ENCODE measurements at regions of chr15 and their contacts with region 1.

Region 1: GRCh38 chr15:75801859-75802593 is 41.2 kb upstream of the UBE2Q2 start:
- DNase-seq: peak; percentile 91
- ATAC-seq: peak; percentile 100
- H3K4me3 Mint-ChIP-seq: peak overlapping the region; percentile 56
- H3K27ac Mint-ChIP-seq: no peak overlapping the region
- H3K4me1 Mint-ChIP-seq: peaks cover 13% of the 10 kb centered on the region
- H3K27me3 Mint-ChIP-seq: peaks cover 59% of the 10 kb centered on the region
- CTCF ChIP-seq: peak; percentile 89

Region 2: GRCh38 chr15:75523011-75523410 is 279.0 kb before region 1 on chr15:
- CTCF ChIA-PET with region 1: no interaction called
- POLR2A ChIA-PET with region 1: no interaction called
- DNase-seq: no peak
- ATAC-seq: no peak
- H3K4me3 Mint-ChIP-seq: no peak overlapping the region
- H3K27ac Mint-ChIP-seq: no peak overlapping the region
- H3K4me1 Mint-ChIP-seq: no peaks in the 10 kb centered on the region
- H3K27me3 Mint-ChIP-seq: no peaks in the 10 kb centered on the region
- CTCF ChIP-seq: no peak

Region 3: GRCh38 chr15:75684642-75685041 is 117.4 kb before region 1 on chr15:
- CTCF ChIA-PET with region 1: interaction called, 24 read pairs
- POLR2A ChIA-PET with region 1: no interaction called
- DNase-seq: no peak
- ATAC-seq: no peak
- H3K4me3 Mint-ChIP-seq: no peak overlapping the region
- H3K27ac Mint-ChIP-seq: no peak overlapping the region
- H3K4me1 Mint-ChIP-seq: peaks cover 22% of the 10 kb centered on the region
- H3K27me3 Mint-ChIP-seq: 0 out of 2 replicates have a peak, but pooled peaks cover 2% of the 10 kb centered on the region
- CTCF ChIP-seq: no peak

Region 4: GRCh38 chr15:75723847-75724660 is 78.0 kb before region 1 on chr15:
- CTCF ChIA-PET with region 1: interaction called, 40 read pairs
- POLR2A ChIA-PET with region 1: no interaction called
- DNase-seq: peak; percentile 35
- ATAC-seq: peak; percentile 9; the same call in 1 of the 2 replicates
- H3K4me3 Mint-ChIP-seq: no peak overlapping the region
- H3K27ac Mint-ChIP-seq: no peak overlapping the region
- H3K4me1 Mint-ChIP-seq: no peaks in the 10 kb centered on the region; the same call in 1 of the 2 replicates
- H3K27me3 Mint-ChIP-seq: peaks cover 50% of the 10 kb centered on the region
- CTCF ChIP-seq: no peak

Region 5: DNA sequence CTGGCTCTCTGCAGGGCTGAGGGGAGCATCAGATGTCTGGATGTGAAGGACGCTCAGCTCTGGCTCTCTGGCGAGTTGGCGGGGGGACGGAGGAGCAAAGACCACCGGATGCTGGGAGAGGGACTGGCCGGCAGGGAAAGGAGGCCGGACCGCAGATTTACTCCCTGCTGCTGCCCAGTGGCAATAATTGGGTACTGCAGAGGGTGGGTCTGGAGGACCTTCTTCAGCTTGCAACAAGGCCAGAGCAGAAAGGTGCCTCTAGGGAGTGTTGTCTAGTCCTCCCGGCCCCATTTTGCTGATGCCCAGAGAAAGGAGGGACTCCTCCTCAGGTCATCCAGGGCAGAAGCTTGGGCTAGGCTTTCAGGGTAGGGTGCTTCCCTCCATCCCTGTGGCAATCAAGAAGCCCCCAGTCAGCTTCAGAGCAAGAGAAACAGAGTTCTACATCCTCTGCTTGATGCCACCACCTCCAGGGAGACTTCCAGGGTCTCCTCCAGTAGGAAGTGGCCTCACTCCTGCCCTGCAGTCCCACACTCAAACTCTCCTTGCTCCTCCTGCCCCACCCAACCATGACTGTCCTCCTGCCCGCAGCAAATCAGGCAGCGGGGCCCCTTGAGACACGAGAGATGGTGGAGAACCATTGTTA is 69.1 kb before region 1 on chr15:
- CTCF ChIA-PET with region 1: interaction called, 40 read pairs
- POLR2A ChIA-PET with region 1: no interaction called
- DNase-seq: peak; percentile 92
- ATAC-seq: peak; percentile 82
- H3K4me3 Mint-ChIP-seq: peak overlapping the region; percentile 20; the same call in 1 of the 2 replicates
- H3K27ac Mint-ChIP-seq: no peak overlapping the region
- H3K4me1 Mint-ChIP-seq: peaks cover 44% of the 10 kb centered on the region
- H3K27me3 Mint-ChIP-seq: peaks cover 2% of the 10 kb centered on the region; the same call in 1 of the 2 replicates
- CTCF ChIP-seq: peak; percentile 75

Region 6: GRCh38 chr15:75738647-75739331 is 63.2 kb before region 1 on chr15:
- CTCF ChIA-PET with region 1: interaction called, 14 read pairs
- POLR2A ChIA-PET with region 1: no interaction called
- DNase-seq: peak; percentile 98
- ATAC-seq: peak; percentile 98
- H3K4me3 Mint-ChIP-seq: peak overlapping the region; percentile 93
- H3K27ac Mint-ChIP-seq: no peak overlapping the region
- H3K4me1 Mint-ChIP-seq: peaks cover 28% of the 10 kb centered on the region
- H3K27me3 Mint-ChIP-seq: peaks cover 40% of the 10 kb centered on the region
- CTCF ChIP-seq: no peak

Region 7: DNA sequence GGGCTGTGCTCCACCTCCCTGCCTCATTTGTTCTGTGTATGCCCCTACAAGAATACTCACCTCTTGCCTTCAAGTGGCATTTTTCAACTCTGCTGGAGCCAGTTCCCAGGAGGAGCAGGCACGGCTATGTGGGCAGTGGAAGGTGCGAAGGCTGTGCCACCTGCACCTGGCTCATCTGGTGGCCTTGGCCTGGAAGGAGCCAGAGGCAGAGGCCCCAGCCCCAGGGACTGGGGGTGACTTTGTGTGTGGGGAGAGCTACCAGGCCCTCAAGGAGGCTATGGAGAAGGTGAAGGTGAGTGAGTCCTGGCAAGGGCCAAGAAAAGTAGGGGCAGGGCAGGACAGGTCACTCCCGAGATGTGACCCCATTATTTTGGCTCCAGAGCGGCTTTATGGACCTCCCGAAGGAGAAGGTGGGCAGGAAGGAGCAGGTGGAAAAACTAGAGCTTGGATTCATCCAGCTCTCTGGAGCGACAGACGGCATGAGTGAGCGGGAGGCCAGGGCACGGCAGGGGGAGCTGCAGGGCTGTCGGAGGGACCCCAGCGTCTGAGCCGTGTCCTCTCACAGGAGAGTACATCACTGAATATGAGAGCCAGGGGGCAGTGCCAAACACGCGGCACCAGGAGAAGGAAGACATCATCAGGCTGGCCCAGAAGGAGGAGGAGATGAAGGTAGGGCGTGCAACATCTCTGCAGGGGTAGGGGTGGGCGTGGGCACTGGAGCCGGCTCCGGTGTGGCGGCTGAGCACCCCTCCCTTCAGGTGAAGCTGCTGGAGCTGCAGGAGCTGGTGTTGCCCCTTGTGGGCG is 16.1 kb before region 1 on chr15:
- CTCF ChIA-PET with region 1: interaction called, 42 read pairs
- POLR2A ChIA-PET with region 1: no interaction called
- DNase-seq: peak; percentile 74
- ATAC-seq: peak; percentile 66
- H3K4me3 Mint-ChIP-seq: peak overlapping the region; percentile 64
- H3K27ac Mint-ChIP-seq: no peak overlapping the region
- H3K4me1 Mint-ChIP-seq: peaks cover 7% of the 10 kb centered on the region
- H3K27me3 Mint-ChIP-seq: peaks cover 34% of the 10 kb centered on the region
- CTCF ChIP-seq: no peak

Region 8: GRCh38 chr15:75928680-75929608 is 126.9 kb after region 1 on chr15:
- CTCF ChIA-PET with region 1: interaction called, 12 read pairs
- POLR2A ChIA-PET with region 1: no interaction called
- DNase-seq: peak; percentile 66
- ATAC-seq: peak; percentile 86
- H3K4me3 Mint-ChIP-seq: no peak overlapping the region
- H3K27ac Mint-ChIP-seq: peak overlapping the region; percentile 82
- H3K4me1 Mint-ChIP-seq: peaks cover 44% of the 10 kb centered on the region
- H3K27me3 Mint-ChIP-seq: no peaks in the 10 kb centered on the region
- CTCF ChIP-seq: peak; percentile 19

Region 9: GRCh38 chr15:75988989-75989388 is 187.0 kb after region 1 on chr15:
- CTCF ChIA-PET with region 1: no interaction called
- POLR2A ChIA-PET with region 1: no interaction called
- DNase-seq: no peak
- ATAC-seq: no peak
- H3K4me3 Mint-ChIP-seq: no peak overlapping the region
- H3K27ac Mint-ChIP-seq: no peak overlapping the region
- H3K4me1 Mint-ChIP-seq: peaks cover 1% of the 10 kb centered on the region
- H3K27me3 Mint-ChIP-seq: no peaks in the 10 kb centered on the region
- CTCF ChIP-seq: no peak

Measured in WTC11 (cell line).